PC-9 (cell line): ENCODE measurements at regions of chr1 and their contacts with region 1.

Region 1: GRCh38 chr1:93827633-93828366 is 51.2 kb downstream of the DNTTIP2 start:
- DNase-seq: peak in 1 of 2 experiments; percentile 90
- H3K4me3 ChIP-seq: peak overlapping the region; percentile 10; the same call in 1 of the 2 replicates
- H3K27ac ChIP-seq: peak overlapping the region; percentile 72
- H3K4me1 ChIP-seq: peaks cover 44% of the 10 kb centered on the region
- H3K27me3 ChIP-seq: no peaks in the 10 kb centered on the region
- CTCF ChIP-seq: no peak

Region 2: DNA sequence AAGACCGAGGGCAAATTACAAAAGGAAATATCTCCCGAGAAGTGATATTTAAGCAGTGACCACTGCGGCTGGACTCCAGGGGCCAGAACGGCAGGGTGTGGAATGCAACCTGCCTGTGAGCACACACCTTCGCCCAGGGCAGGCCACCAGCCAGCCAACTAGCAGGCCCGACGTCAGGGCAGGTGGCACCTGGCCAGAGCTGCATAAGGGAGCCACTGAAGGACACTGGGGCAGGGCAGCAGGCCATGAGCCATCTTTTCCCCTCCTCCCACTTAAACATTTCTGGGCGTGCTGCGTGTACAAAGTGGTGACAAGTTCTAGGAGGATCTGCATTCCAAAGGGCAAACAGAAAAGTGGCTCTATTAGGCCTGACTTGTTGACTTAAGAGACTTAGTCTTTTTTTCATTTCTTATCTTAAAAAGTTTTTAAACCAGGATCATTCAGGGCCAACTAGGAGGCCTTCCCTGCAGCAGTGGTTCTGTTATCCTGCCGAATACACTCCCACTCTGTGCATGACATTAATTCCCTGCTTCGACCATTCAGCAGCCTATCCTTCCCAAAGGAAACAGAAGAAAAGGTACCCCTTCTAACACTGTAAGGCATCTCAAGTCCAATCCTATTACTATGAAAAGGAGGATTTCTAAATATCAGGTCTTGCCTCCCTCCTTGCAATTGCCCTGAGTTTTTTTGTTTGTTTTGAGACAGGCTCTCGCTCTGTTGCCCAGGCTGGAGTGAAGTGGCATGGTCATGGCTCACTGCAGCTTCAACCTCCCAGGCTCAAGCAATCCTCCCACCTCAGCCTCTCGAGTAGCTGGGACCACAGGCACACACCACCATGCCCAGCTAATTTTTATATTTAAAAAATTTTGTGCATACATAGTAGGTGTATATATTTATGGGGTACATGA is 242.5 kb before region 1 on chr1:
- CTCF ChIA-PET with region 1: no interaction called
- POLR2A ChIA-PET with region 1: interaction called, 11 read pairs
- intact Hi-C with region 1: no loop called
- DNase-seq: peak; percentile 99 to 100
- H3K4me3 ChIP-seq: peak overlapping the region; percentile 33; the same call in 1 of the 2 replicates
- H3K27ac ChIP-seq: peak overlapping the region; percentile 83
- H3K4me1 ChIP-seq: peaks cover 98% of the 10 kb centered on the region
- H3K27me3 ChIP-seq: no peaks in the 10 kb centered on the region
- CTCF ChIP-seq: no peak

Region 3: GRCh38 chr1:93595743-93596142 is 232.1 kb before region 1 on chr1:
- CTCF ChIA-PET with region 1: no interaction called
- POLR2A ChIA-PET with region 1: no interaction called
- intact Hi-C with region 1: no loop called
- DNase-seq: no peak
- H3K4me3 ChIP-seq: no peak overlapping the region
- H3K27ac ChIP-seq: peak overlapping the region; percentile 13
- H3K4me1 ChIP-seq: peaks cover 40% of the 10 kb centered on the region
- H3K27me3 ChIP-seq: no peaks in the 10 kb centered on the region
- CTCF ChIP-seq: no peak

Region 4: DNA sequence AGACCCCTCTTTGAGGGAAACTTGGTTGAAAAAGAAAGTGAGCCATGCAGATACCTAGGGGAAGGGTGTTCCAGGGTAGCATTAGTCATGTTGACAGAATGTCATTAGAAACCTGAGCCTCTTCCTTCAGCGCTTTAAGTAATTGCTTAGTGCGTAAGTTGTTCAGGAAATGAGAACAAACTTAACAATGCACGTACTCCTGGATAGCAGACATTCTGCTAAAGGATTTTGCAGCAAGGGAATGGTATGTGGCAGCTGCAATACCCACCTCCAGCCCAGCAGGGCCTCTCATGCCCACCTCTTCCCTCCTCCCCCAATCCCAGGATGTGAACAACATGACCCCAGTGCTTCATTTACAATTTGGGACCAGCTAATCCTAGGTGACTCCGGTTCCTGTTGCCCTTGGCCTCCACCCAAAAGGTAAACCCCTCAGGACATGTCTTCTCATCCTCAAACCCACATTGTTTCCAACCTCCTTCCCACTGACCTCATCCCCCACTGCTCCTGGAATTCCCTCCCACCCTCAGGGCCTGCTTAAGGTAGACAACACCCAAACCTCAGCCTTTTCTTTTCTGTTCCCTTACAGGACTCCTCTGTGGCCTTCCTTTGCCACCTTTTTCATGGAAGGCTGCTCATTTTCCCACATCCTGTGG is 48.1 kb before region 1 on chr1:
- CTCF ChIA-PET with region 1: no interaction called
- POLR2A ChIA-PET with region 1: no interaction called
- intact Hi-C with region 1: no loop called
- DNase-seq: peak; percentile 93 to 100
- H3K4me3 ChIP-seq: peak overlapping the region; percentile 15; the same call in 1 of the 2 replicates
- H3K27ac ChIP-seq: peak overlapping the region; percentile 95
- H3K4me1 ChIP-seq: peaks cover 77% of the 10 kb centered on the region
- H3K27me3 ChIP-seq: no peaks in the 10 kb centered on the region
- CTCF ChIP-seq: peak; percentile 31; the same call in 1 of the 2 replicates

Region 5: GRCh38 chr1:93804412-93804811 is 23.4 kb before region 1 on chr1:
- CTCF ChIA-PET with region 1: no interaction called
- POLR2A ChIA-PET with region 1: no interaction called
- intact Hi-C with region 1: no loop called
- DNase-seq: peak; percentile 38 to 90
- H3K4me3 ChIP-seq: peak overlapping the region; percentile 2; the same call in 1 of the 2 replicates
- H3K27ac ChIP-seq: peak overlapping the region; percentile 66
- H3K4me1 ChIP-seq: peaks cover 35% of the 10 kb centered on the region
- H3K27me3 ChIP-seq: no peaks in the 10 kb centered on the region
- CTCF ChIP-seq: no peak